A549 (cell line): ENCODE measurements at regions of chr7 and their contacts with region 1.

Region 1: DNA sequence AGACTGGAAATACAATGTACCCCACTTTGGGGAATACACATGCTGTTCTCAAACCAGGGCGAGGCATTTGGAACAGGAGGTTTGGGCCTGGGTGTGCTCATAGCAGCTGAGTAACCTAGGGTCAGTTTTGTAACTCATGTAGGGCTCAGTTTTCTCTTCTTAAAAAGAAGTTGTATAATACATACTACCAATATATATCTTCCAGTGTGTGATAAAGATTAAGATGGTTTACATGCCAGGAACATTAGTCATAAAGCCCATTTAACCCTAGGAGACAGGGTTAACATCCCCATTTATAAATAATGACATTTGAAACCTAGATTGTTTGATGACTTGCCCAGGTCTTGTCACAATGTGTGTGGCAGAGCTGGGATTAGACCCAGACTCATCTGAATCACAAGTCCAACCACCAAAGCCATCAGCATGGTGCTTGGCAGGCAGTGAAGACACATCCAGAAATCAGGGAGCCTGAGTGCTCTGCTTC is 6.0 kb downstream of the AKR1B10 start:
- DNase-seq: no peak
- ATAC-seq: peak in 1 of 2 experiments; percentile 6; a peak in 3 of 6 replicates
- H3K4me3 ChIP-seq: peak overlapping the region; percentile 84
- H3K27ac ChIP-seq: peak overlapping the region; percentile 91 to 98
- H3K4me1 ChIP-seq: peaks cover 72% of the 10 kb centered on the region
- CTCF ChIP-seq: no peak
- EP300 ChIP-seq: peak; percentile 27 to 74; a peak in 3 of 5 replicates
- POLR2A ChIP-seq: no peak
- RAD21 ChIP-seq: 0 out of 5 replicates have a peak, but pooled peaks of 1 of the 2 experiments have one; percentile 10

Region 2: GRCh38 chr7:134448700-134449229 is 84.6 kb before region 1 on chr7:
- CTCF ChIA-PET with region 1: no interaction called
- POLR2A ChIA-PET with region 1: no interaction called
- DNase-seq: peak; percentile 94 to 97
- ATAC-seq: peak; percentile 58 to 71
- H3K4me3 ChIP-seq: no peak overlapping the region
- H3K27ac ChIP-seq: peak overlapping the region; percentile 94 to 95
- H3K4me1 ChIP-seq: peaks cover 97% of the 10 kb centered on the region
- CTCF ChIP-seq: no peak
- EP300 ChIP-seq: peak in 1 of 2 experiments; percentile 42; a peak in 1 of 5 replicates
- POLR2A ChIP-seq: no peak
- RAD21 ChIP-seq: no peak; a peak in 1 of 5 replicates

Region 3: GRCh38 chr7:134520130-134520529 is 13.2 kb before region 1 on chr7:
- CTCF ChIA-PET with region 1: interaction called, 914 read pairs
- POLR2A ChIA-PET with region 1: no interaction called
- DNase-seq: peak in 1 of 2 experiments; percentile 67
- ATAC-seq: peak; percentile 59 to 67; a peak in 5 of 6 replicates
- H3K4me3 ChIP-seq: peak overlapping the region; percentile 32
- H3K27ac ChIP-seq: peak overlapping the region; percentile 76 to 81
- H3K4me1 ChIP-seq: peaks cover 65% of the 10 kb centered on the region
- CTCF ChIP-seq: peak; percentile 76
- EP300 ChIP-seq: no peak
- POLR2A ChIP-seq: no peak
- RAD21 ChIP-seq: peak; percentile 70 to 78; a peak in 4 of 5 replicates

Region 4: DNA sequence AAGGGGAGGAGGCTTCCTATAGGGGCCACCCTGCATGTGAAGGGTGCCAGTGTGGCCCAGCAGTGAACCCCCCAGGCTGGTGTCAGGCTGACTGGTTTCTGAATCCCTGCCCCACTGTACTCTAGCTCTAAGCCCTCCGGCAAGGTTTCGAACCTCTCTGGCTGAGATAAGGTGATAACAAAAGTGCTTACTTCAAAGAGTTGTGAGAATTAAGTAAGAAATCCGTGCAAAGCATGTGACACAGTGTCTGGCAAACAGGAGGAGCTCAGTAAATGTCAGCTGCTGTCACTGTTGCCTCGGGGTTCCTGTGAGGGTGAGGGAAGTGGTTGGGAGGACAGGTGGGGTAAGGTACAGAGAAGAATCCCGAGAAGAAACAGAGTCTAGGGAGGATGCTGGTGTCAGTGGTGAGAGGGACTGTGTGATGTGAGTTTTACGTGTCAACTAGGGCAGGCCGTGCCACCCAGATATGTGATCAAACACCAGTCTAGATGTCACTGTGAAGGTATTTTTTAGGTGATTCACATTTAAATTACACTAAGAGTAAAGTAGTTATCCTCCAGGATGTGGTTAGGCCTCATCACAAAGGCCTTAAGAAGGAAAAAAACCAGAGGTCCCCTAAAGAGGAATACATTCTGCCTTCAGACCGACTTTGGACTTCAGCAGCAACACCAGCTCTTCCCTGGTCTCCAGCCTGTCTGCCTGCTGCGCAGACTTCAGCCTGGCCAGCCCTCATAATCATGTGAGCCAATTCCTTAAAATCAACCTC is 177.7 kb after region 1 on chr7:
- CTCF ChIA-PET with region 1: no interaction called
- POLR2A ChIA-PET with region 1: no interaction called
- DNase-seq: no peak
- ATAC-seq: no peak
- H3K4me3 ChIP-seq: no peak overlapping the region
- H3K27ac ChIP-seq: no peak overlapping the region
- H3K4me1 ChIP-seq: no peaks in the 10 kb centered on the region
- CTCF ChIP-seq: no peak
- EP300 ChIP-seq: no peak
- POLR2A ChIP-seq: no peak
- RAD21 ChIP-seq: no peak